IMR-90 (cell line): ENCODE measurements at regions of chr18 and their contacts with region 1.

Region 1: GRCh38 chr18:2402084-2402483 is 169.2 kb downstream of the METTL4 start:
- DNase-seq: peak; percentile 58
- ATAC-seq: peak; percentile 76
- H3K4me3 ChIP-seq: no peak overlapping the region
- H3K27ac ChIP-seq: no peak overlapping the region
- H3K4me1 ChIP-seq: peaks cover 9% of the 10 kb centered on the region
- H3K27me3 ChIP-seq: no peaks in the 10 kb centered on the region
- CTCF ChIP-seq: no peak
- POLR2A ChIP-seq: no peak
- RAD21 ChIP-seq: no peak

Region 2: GRCh38 chr18:2515908-2516625 is 114.0 kb after region 1 on chr18:
- CTCF ChIA-PET with region 1: no interaction called
- POLR2A ChIA-PET with region 1: no interaction called
- dilution Hi-C with region 1: no loop called
- in situ Hi-C with region 1: no loop called
- intact Hi-C with region 1: loop called (anchors 5 kb)
- DNase-seq: peak; percentile 95
- ATAC-seq: peak; percentile 79
- H3K4me3 ChIP-seq: no peak overlapping the region
- H3K27ac ChIP-seq: peak overlapping the region; percentile 77
- H3K4me1 ChIP-seq: peaks cover 6% of the 10 kb centered on the region
- H3K27me3 ChIP-seq: no peaks in the 10 kb centered on the region
- CTCF ChIP-seq: no peak
- POLR2A ChIP-seq: no peak
- RAD21 ChIP-seq: no peak